Activated CD4-positive, alpha-beta memory T cell treated with anti-CD3 and anti-CD28 coated beads for 36 hours (primary cell): ENCODE measurements at regions of chr6 and their contacts with region 1.

Region 1: DNA sequence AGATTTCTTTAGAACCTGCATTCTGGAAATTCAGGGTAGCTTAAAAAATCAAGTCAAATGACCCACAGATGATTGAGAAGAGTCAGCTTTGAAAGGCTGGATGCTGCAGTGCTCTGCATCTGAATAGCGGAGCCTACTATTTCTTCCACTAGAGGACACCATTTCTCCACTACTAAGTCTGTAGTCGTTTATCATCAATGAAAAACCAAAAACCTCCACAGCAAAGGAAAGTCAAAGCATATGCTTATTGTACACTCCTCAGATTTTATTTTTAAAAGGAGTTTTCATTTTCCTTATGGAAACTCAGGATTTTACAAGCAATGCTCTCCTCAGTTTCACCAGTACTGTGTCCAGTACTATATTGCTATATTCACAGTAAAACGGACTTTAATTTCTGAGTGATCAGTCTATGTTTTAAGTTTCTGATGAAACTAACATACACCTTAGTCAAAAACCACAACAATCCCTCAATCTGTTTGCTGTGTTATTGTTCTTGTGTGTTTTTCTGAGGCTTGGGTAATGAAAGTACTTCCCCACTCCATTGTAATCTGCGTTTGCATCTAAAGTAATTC is 50.5 kb upstream of the ENPP5 start:
- DNase-seq: no peak
- H3K4me3 Mint-ChIP-seq: no peak overlapping the region
- H3K27ac Mint-ChIP-seq: peak overlapping the region; percentile 73
- H3K4me1 Mint-ChIP-seq: peaks cover 24% of the 10 kb centered on the region
- H3K27me3 Mint-ChIP-seq: no peaks in the 10 kb centered on the region

Region 2: GRCh38 chr6:46170357-46171289 is 50.7 kb before region 1 on chr6 and contains the start of gene ENPP5:
- CTCF ChIA-PET with region 1: no interaction called
- POLR2A ChIA-PET with region 1: no interaction called
- intact Hi-C with region 1: loop called (anchors 5 kb)
- DNase-seq: peak; percentile 78
- H3K4me3 Mint-ChIP-seq: peak within 1 kb of the TSS; percentile 71
- H3K27ac Mint-ChIP-seq: no peak within 1 kb of the TSS
- H3K4me1 Mint-ChIP-seq: peaks cover 15% of the 10 kb centered on the region
- H3K27me3 Mint-ChIP-seq: peaks cover 35% of the 10 kb centered on the region
- total RNA-seq, gene ENPP5: 0.10 to 0.12 TPM

Region 3: DNA sequence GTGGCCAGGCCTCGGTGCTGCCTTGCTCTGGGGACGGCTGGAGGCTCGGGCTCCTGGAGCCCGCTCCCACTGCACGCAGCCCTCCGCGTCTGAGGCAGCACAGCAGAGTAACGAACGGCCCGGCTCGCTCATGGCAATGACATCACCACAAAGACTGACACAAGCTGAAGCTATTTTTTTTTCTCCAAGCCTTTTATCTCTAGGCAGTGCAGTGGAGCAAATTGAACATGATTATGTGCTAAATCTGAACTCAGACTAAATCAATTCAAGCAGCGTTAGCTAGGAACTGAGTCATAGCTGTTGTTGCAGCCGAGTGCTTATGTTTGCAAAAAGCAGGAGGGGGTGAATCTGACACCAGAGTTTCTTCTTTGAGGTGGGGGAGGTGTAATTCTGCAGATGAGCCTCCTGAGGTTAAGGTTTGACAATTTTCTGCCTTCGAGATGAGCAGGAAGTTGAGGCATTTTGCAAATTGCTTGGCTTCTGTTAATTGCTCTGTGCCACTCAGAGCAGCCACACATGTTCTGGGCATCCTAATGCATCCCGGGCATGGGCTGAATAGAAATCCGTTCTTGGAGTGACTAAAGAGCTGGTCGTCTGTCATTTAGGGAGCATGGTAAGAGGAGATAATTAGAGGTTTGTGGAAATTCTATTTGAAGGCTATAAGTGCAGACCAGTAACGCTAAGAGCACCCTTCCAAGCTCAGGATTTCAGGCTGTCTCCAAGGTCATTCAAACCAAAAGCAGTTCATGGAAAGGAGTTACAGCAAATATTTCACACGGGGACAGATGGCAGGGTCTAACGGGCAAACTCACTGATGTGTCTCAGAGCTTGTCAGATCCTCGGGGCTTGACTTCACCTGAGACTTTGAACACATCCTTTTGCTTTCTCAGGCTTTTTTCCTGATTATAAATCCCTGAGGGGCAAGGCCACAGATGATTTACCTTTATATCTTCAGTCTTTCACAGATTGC is 104.5 kb after region 1 on chr6:
- CTCF ChIA-PET with region 1: interaction called, 6 read pairs
- POLR2A ChIA-PET with region 1: no interaction called
- intact Hi-C with region 1: loop called (anchors 1 kb)
- DNase-seq: peak; percentile 51
- H3K4me3 Mint-ChIP-seq: peak overlapping the region; percentile 17
- H3K27ac Mint-ChIP-seq: peak overlapping the region; percentile 31
- H3K4me1 Mint-ChIP-seq: peaks cover 17% of the 10 kb centered on the region
- H3K27me3 Mint-ChIP-seq: peaks cover 12% of the 10 kb centered on the region

Region 4: GRCh38 chr6:46410334-46410953 is 189.1 kb after region 1 on chr6:
- CTCF ChIA-PET with region 1: interaction called, 84 read pairs
- POLR2A ChIA-PET with region 1: no interaction called
- intact Hi-C with region 1: loop called (anchors 1 kb)
- DNase-seq: peak; percentile 34
- H3K4me3 Mint-ChIP-seq: no peak overlapping the region
- H3K27ac Mint-ChIP-seq: no peak overlapping the region
- H3K4me1 Mint-ChIP-seq: no peaks in the 10 kb centered on the region
- H3K27me3 Mint-ChIP-seq: no peaks in the 10 kb centered on the region

Region 5: DNA sequence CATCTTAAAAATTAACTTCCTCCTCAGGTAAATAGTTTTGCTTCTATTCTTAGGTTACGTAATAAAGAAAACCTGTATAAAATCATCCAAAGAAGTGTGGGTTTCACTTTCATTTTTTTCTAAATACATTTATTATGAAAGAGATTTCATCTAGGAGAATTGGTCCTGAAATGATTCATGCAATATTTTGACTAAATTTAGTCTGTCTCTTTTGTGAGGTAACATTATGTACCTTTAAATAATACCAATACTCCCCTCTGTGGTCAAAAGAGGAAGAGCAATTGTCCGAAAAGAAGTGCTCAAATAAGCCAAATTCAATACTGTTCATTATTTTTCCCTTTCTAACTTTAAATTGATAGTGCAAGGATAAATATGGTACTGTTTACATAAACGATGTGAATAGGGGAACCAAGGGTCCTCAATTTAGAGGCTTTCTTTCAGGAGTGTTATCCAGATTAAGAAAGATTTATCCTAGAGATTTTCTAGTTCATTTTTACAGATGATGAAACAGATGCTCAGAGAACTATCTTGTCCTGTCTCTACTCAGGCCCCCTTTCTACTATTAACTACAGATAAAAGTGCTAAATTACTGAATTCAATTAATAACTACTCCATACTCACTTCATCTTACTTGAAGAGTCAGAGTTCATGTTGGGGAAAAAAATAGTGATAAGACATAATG is 405.1 kb after region 1 on chr6:
- CTCF ChIA-PET with region 1: no interaction called
- POLR2A ChIA-PET with region 1: no interaction called
- intact Hi-C with region 1: loop called (anchors 5 kb)
- DNase-seq: no peak
- H3K4me3 Mint-ChIP-seq: no peak overlapping the region
- H3K27ac Mint-ChIP-seq: no peak overlapping the region
- H3K4me1 Mint-ChIP-seq: peaks cover 10% of the 10 kb centered on the region
- H3K27me3 Mint-ChIP-seq: peaks cover 9% of the 10 kb centered on the region

Region 6: GRCh38 chr6:46734867-46735719 is 513.8 kb after region 1 on chr6 and contains the start of gene PLA2G7:
- CTCF ChIA-PET with region 1: no interaction called
- POLR2A ChIA-PET with region 1: no interaction called
- intact Hi-C with region 1: no loop called
- DNase-seq: no peak
- H3K4me3 Mint-ChIP-seq: no peak within 1 kb of the TSS
- H3K27ac Mint-ChIP-seq: no peak within 1 kb of the TSS
- H3K4me1 Mint-ChIP-seq: peaks cover 7% of the 10 kb centered on the region
- H3K27me3 Mint-ChIP-seq: peaks cover 47% of the 10 kb centered on the region
- total RNA-seq, gene PLA2G7: not detected

Region 7: DNA sequence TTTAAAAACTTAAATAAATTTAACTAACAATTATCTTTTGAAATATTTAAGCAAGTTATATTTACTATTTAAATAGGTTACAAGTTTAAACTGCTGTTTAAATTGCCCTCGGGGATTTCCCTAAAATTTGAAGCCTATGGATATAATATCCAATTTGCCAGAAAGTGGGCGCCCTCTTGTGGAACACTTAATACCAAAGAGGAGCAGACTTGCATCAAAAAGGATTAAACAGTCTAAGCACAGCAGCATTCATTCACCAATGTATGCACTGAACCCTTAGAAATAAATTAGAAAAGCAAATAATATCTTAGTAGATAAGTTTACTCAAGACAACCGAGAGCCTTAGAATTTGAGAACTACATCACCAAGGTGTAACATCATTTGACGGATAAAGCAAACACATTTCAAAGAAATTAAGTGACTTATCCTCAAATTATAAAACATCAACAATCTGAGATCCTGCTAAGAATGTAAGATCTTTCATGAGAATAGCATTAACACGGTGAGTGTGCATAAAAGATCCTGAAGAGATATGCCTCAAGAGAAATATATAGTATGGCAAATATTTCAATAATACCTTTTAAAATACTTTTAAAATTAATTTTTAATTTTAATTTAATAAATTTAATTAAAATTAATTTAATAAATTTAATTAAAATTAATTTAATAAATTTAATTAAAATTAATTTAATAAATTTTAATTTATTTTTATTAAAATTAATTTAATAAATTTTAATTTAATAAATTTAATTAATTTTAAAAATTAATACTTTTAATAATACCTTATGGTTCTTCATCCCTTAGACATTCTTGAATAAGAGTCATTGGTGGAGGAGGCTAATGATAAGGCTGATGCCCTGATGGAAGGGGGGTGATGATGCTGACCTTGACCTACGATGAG is 560.4 kb after region 1 on chr6:
- CTCF ChIA-PET with region 1: no interaction called
- POLR2A ChIA-PET with region 1: no interaction called
- intact Hi-C with region 1: loop called (anchors 5 kb)
- DNase-seq: peak; percentile 24
- H3K4me3 Mint-ChIP-seq: no peak overlapping the region
- H3K27ac Mint-ChIP-seq: no peak overlapping the region
- H3K4me1 Mint-ChIP-seq: no peaks in the 10 kb centered on the region
- H3K27me3 Mint-ChIP-seq: peaks cover 3% of the 10 kb centered on the region

Region 8: GRCh38 chr6:47016261-47016660 is 795.0 kb after region 1 on chr6:
- CTCF ChIA-PET with region 1: no interaction called
- POLR2A ChIA-PET with region 1: no interaction called
- intact Hi-C with region 1: no loop called
- DNase-seq: no peak
- H3K4me3 Mint-ChIP-seq: no peak overlapping the region
- H3K27ac Mint-ChIP-seq: no peak overlapping the region
- H3K4me1 Mint-ChIP-seq: no peaks in the 10 kb centered on the region
- H3K27me3 Mint-ChIP-seq: no peaks in the 10 kb centered on the region